Activated naive CD4-positive, alpha-beta T cell treated with anti-CD3 and anti-CD28 coated beads for 36 hours (primary cell): ENCODE measurements at regions of chr1 and their contacts with region 1.

Region 1: DNA sequence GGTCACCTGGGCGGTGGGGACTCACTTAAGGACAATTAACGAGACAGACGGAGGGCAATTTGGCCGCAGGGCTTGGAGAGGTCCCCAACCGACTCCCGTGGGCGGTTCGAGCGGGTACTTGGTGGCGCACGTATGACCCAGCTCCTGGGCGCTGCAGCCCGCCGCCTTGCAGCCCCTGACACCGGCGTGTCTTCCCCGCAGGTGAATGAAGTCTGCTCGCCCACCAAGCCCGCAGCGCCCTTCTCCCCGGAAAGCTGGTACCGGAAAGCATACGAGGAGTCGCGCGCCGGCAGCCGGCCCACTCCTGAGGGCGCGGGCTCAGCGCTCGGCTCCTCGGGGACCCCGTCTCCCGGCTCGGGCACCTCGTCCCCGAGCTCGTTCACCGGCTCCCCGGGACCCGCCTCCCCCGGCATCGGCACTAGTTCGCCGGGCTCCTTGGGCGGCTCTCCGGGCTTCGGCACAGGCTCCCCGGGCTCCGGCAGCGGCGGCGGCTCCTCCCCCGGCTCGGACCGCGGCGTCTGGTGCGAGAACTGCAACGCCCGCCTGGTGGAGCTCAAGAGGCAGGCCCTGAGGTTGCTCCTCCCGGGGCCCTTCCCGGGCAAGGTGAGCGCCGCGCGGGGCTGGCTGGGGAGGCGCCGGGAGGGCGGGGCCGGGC is 1.4 kb downstream of the KIF26B start:
- DNase-seq: peak; percentile 89
- H3K4me3 Mint-ChIP-seq: peak overlapping the region; percentile 71
- H3K27ac Mint-ChIP-seq: no peak overlapping the region
- H3K4me1 Mint-ChIP-seq: peaks cover 17% of the 10 kb centered on the region
- H3K27me3 Mint-ChIP-seq: peaks cover 61% of the 10 kb centered on the region

Region 2: GRCh38 chr1:245195401-245195800 is 39.2 kb after region 1 on chr1:
- CTCF ChIA-PET with region 1: no interaction called
- intact Hi-C with region 1: no loop called
- DNase-seq: no peak
- H3K4me3 Mint-ChIP-seq: no peak overlapping the region
- H3K27ac Mint-ChIP-seq: no peak overlapping the region
- H3K4me1 Mint-ChIP-seq: no peaks in the 10 kb centered on the region
- H3K27me3 Mint-ChIP-seq: peaks cover 15% of the 10 kb centered on the region

Region 3: GRCh38 chr1:245258271-245258920 is 102.2 kb after region 1 on chr1:
- CTCF ChIA-PET with region 1: no interaction called
- intact Hi-C with region 1: no loop called
- DNase-seq: no peak
- H3K4me3 Mint-ChIP-seq: no peak overlapping the region
- H3K27ac Mint-ChIP-seq: no peak overlapping the region
- H3K4me1 Mint-ChIP-seq: no peaks in the 10 kb centered on the region
- H3K27me3 Mint-ChIP-seq: peaks cover 6% of the 10 kb centered on the region

Region 4: DNA sequence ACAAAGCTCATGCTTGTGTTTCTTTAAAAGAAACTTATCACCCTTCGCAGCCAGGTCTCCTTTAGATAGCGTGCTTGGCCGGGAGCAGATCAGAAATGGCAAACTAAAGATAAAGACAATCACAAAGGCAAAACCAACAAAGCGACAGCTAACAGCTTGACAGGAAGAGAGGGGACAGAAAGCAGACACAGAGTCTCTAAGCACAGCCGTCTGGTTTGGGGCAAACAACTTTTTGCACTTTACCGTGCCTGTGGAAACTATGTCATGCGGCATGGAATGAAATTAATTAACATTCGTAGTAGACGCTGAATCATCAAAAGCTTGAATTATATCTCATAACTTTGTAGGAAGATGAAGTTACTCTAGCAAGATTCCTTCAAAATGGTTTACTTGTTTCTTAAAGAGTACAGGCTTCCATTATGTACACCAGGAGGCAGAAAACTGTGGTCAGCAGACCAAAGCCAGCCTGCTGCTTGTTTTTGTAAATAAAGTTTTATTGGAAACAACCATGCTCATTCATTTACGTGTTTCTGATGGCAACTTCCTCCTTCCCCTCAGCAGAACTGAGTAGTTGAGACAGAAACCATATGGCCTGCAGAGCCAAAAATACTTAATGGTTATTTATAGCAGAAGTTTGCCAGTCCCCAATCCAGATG is 181.7 kb after region 1 on chr1:
- CTCF ChIA-PET with region 1: no interaction called
- intact Hi-C with region 1: loop called (anchors 5 kb)
- DNase-seq: no peak
- H3K4me3 Mint-ChIP-seq: no peak overlapping the region
- H3K27ac Mint-ChIP-seq: no peak overlapping the region
- H3K4me1 Mint-ChIP-seq: peaks cover 14% of the 10 kb centered on the region
- H3K27me3 Mint-ChIP-seq: peaks cover 10% of the 10 kb centered on the region

Region 5: DNA sequence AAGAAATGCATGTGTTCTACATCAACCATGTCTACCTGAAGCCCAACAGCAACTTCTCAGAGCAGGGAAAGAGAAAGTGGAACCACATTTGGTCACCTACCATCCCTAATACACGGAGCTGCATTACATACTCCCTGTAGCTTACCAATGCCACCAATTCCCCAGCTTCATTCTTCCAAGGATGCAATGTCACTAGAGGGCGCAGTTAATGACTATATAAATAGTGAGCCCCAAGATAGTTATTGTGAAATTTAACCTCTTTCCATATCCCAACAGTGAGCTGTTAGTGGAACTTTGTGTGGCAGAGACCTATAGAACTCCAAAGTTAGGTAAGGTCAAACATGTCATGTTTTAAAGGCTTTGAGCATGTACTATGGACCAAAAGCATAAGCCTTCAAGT is 732.6 kb after region 1 on chr1:
- CTCF ChIA-PET with region 1: interaction called, 5 read pairs
- intact Hi-C with region 1: loop called (anchors 2 kb)
- DNase-seq: peak; percentile 28
- H3K4me3 Mint-ChIP-seq: no peak overlapping the region
- H3K27ac Mint-ChIP-seq: no peak overlapping the region
- H3K4me1 Mint-ChIP-seq: no peaks in the 10 kb centered on the region
- H3K27me3 Mint-ChIP-seq: no peaks in the 10 kb centered on the region

Region 6: GRCh38 chr1:246002725-246003441 is 846.7 kb after region 1 on chr1:
- CTCF ChIA-PET with region 1: interaction called, 10 read pairs
- intact Hi-C with region 1: loop called (anchors 1 kb)
- DNase-seq: peak; percentile 93
- H3K4me3 Mint-ChIP-seq: no peak overlapping the region
- H3K27ac Mint-ChIP-seq: no peak overlapping the region
- H3K4me1 Mint-ChIP-seq: no peaks in the 10 kb centered on the region
- H3K27me3 Mint-ChIP-seq: no peaks in the 10 kb centered on the region

Region 7: GRCh38 chr1:246450611-246451251 is 1294.5 kb after region 1 on chr1:
- CTCF ChIA-PET with region 1: no interaction called
- intact Hi-C with region 1: loop called (anchors 1 kb)
- DNase-seq: no peak
- H3K4me3 Mint-ChIP-seq: no peak overlapping the region
- H3K27ac Mint-ChIP-seq: no peak overlapping the region
- H3K4me1 Mint-ChIP-seq: peaks cover 3% of the 10 kb centered on the region
- H3K27me3 Mint-ChIP-seq: no peaks in the 10 kb centered on the region

Region 8: GRCh38 chr1:246699095-246699735 is 1543.0 kb after region 1 on chr1:
- CTCF ChIA-PET with region 1: interaction called, 3 read pairs
- intact Hi-C with region 1: loop called (anchors 1 kb)
- DNase-seq: peak; percentile 93
- H3K4me3 Mint-ChIP-seq: peak overlapping the region; percentile 32
- H3K27ac Mint-ChIP-seq: peak overlapping the region; percentile 30
- H3K4me1 Mint-ChIP-seq: peaks cover 2% of the 10 kb centered on the region
- H3K27me3 Mint-ChIP-seq: peaks cover 6% of the 10 kb centered on the region